ENCODE measurements at regions of chr2 and their contacts with region 1.

Region 1: DNA sequence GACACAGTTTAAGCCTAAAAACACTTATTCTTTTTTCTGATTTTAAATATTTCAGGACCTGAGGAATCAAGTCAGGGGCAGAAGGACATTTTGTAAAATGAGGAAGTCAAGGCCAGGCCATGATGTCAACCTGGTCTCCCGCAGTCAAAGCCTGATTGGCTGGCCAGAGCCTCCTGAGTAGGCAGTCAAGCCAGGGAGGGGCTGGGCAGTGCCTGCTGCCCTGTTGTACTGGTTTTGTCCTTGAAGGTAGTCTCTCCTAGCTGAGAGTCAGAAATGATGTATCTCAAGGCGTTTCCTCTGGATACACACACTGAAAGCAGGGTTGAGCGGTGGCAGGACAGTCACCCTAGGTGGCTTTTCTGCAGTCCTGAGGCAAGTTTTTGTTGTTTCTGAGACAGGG is 19.8 kb downstream of the CCT7 start:
- DNase-seq: peak; percentile 40

Region 2: DNA sequence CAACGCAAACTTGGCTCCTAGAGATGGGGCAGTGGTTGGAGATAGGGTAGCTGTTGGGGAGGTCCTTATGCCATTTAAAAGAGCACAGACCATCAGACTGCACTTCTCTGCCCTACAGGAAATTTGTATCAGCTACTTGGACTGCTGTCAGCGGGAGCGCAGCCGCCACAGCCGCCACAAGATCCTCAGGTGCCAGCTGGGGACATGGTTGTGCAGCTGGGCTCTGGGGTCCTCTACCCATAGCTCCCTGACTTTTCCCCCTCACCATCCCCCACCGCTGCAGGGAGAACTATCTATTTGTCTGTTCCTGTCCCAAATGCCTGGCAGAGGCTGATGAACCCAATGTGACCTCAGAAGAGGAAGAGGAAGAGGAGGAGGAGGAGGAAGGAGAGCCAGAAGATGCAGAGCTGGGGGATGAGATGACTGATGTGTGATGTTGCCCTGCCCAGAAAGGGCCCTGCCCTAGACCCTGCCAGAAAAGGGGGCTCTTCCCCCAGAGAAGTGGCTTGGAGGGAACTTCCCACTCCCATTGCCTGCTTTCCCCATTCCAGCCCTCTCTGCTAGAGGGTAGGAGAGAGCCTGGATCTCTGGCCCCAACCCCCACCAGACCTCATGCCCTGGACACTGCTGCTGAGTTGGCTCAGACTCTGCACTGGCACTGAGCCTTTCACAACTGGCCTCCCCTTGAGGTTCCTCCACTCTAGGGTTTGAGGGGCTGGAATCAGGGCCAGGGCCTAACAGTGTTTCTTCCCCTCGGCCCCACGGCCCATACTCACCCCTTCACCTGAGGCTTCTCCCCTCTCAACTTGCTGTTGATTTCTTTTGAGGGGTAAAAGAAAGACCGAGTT is 28.2 kb before region 1 on chr2:
- intact Hi-C with region 1: loop called in 1 of 2 experiments (anchors 2 kb)
- DNase-seq: peak; percentile 62

Measured in posterior vena cava (tissue), 2 donors.